Natural killer cell (primary cell): ENCODE measurements at regions of chr3 and their contacts with region 1.

Region 1: GRCh38 chr3:114418724-114419543 is 125.1 kb downstream of the TIGIT start:
- DNase-seq: peak in 1 of 2 donors; percentile 82
- ATAC-seq: peak; percentile 84 to 98 (median 97)
- H3K4me3 ChIP-seq: no peak overlapping the region
- H3K4me3 Mint-ChIP-seq: no peak overlapping the region
- H3K27ac ChIP-seq: no peak overlapping the region
- H3K27ac Mint-ChIP-seq: no peak overlapping the region
- H3K4me1 ChIP-seq: no peaks in the 10 kb centered on the region
- H3K4me1 Mint-ChIP-seq: no peaks in the 10 kb centered on the region
- H3K27me3 ChIP-seq: no peaks in the 10 kb centered on the region
- H3K27me3 Mint-ChIP-seq: no peaks in the 10 kb centered on the region
- CTCF ChIP-seq: peak; percentile 84

Region 2: GRCh38 chr3:113634782-113635474 is 784.0 kb before region 1 on chr3:
- intact Hi-C with region 1: no loop called
- DNase-seq: no peak
- ATAC-seq: no peak
- H3K4me3 ChIP-seq: no peak overlapping the region
- H3K4me3 Mint-ChIP-seq: no peak overlapping the region
- H3K27ac ChIP-seq: no peak overlapping the region
- H3K27ac Mint-ChIP-seq: no peak overlapping the region
- H3K4me1 ChIP-seq: no peaks in the 10 kb centered on the region
- H3K4me1 Mint-ChIP-seq: peaks cover 0 to 4% of the 10 kb centered on the region in 2 donors
- H3K27me3 ChIP-seq: no peaks in the 10 kb centered on the region
- H3K27me3 Mint-ChIP-seq: no peaks in the 10 kb centered on the region
- CTCF ChIP-seq: no peak

Region 3: DNA sequence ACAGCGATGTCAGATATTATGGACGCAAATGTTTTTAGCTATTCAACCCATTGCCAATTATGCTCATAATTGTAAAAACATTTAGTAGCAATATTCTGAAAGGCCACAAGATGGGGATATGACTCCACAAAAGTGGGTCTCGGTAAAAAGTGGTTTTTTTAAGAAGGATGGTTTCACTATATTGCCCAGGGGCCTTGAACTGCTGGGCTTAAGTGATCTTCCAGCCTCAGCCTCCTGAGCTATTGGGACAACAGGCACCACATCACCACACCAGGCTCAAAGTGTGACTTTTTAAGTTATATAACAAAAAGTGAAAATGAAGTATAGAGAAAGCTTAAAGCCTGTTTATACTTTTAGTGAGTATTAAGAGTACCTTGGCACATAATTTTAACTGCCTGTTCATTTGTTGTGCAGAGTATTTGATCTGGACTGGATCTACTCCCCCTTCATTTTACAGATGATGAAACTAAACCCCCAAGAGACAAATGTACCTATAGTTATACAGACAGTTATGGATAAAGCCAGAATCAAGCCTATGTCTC is 682.3 kb before region 1 on chr3:
- intact Hi-C with region 1: loop called (anchors 10 kb)
- DNase-seq: peak in 1 of 2 donors; percentile 85
- ATAC-seq: peak; percentile 87 to 92 (median 88)
- H3K4me3 ChIP-seq: no peak overlapping the region
- H3K4me3 Mint-ChIP-seq: no peak overlapping the region
- H3K27ac ChIP-seq: no peak overlapping the region
- H3K27ac Mint-ChIP-seq: peak overlapping the region; percentile 82 to 100
- H3K4me1 ChIP-seq: peaks cover 5% of the 10 kb centered on the region
- H3K4me1 Mint-ChIP-seq: peaks cover 32 to 37% of the 10 kb centered on the region in 2 donors
- H3K27me3 ChIP-seq: no peaks in the 10 kb centered on the region
- H3K27me3 Mint-ChIP-seq: no peaks in the 10 kb centered on the region
- CTCF ChIP-seq: peak; percentile 79

Region 4: GRCh38 chr3:114152519-114153151 is 266.3 kb before region 1 on chr3:
- intact Hi-C with region 1: loop called (anchors 1 kb)
- DNase-seq: peak; percentile 78 to 91
- ATAC-seq: peak; percentile 93 to 98 (median 98)
- H3K4me3 ChIP-seq: peak overlapping the region; percentile 28
- H3K4me3 Mint-ChIP-seq: peak overlapping the region; percentile 74
- H3K27ac ChIP-seq: peak overlapping the region; percentile 6
- H3K27ac Mint-ChIP-seq: peak overlapping the region; percentile 19 to 69
- H3K4me1 ChIP-seq: peaks cover 7% of the 10 kb centered on the region
- H3K4me1 Mint-ChIP-seq: peaks cover 8 to 10% of the 10 kb centered on the region in 2 donors
- H3K27me3 ChIP-seq: no peaks in the 10 kb centered on the region
- H3K27me3 Mint-ChIP-seq: peaks cover 0 to 3% of the 10 kb centered on the region in 2 donors
- CTCF ChIP-seq: peak; percentile 98

Region 5: DNA sequence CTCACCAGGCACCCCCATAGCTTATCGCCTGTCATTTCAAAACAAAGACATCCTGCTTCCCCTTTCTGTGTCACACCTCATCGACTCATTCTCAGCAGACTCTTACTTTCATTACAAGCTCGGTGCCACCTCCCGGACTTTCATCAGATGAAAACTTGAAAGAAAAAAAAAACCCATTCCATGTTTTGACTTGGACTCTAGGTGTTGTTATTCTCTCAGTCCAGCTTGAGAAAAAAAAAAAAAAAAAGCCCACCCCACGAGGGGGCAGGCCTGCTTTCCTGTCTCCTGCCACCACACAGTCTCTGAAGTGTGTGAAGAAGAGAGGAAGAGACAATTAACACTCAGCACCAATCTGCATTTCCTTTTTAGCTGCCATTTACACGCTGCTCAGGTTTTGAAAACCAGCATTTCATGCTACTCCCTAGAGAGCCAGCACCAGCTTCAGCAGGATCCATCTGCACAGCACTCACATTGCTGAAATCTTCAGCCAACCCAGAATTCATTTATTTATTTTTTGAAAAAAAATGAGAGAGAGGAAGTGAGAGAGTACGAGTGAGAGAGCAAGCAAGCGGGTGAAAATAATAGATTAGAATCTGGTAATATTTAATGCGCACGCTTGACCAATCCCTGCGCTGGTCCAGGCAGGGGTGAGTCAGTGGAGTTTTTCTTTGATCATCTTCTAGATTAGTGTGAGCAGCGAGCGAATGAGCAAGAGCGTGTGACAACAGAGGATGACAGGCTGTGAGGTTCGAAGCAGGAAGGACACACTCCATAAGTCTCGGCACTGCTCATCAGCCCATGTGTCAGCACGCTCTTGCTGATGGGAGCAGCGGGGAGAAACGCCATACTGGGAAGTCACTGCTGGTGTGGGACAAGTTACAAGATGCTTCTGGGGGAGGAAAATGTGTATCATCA is 205.1 kb before region 1 on chr3:
- intact Hi-C with region 1: loop called (anchors 2 kb)
- DNase-seq: peak; percentile 73 to 88
- ATAC-seq: peak; percentile 61 to 77 (median 63)
- H3K4me3 ChIP-seq: peak overlapping the region; percentile 46
- H3K4me3 Mint-ChIP-seq: no peak overlapping the region
- H3K27ac ChIP-seq: peak overlapping the region; percentile 97
- H3K27ac Mint-ChIP-seq: no peak overlapping the region
- H3K4me1 ChIP-seq: peaks cover 63% of the 10 kb centered on the region
- H3K4me1 Mint-ChIP-seq: no peaks in the 10 kb centered on the region
- H3K27me3 ChIP-seq: no peaks in the 10 kb centered on the region
- H3K27me3 Mint-ChIP-seq: no peaks in the 10 kb centered on the region
- CTCF ChIP-seq: peak; percentile 12

Region 6: GRCh38 chr3:114323546-114324254 is 95.2 kb before region 1 on chr3:
- intact Hi-C with region 1: no loop called
- DNase-seq: peak in 1 of 2 donors; percentile 46
- ATAC-seq: peak; percentile 87 to 92 (median 91)
- H3K4me3 ChIP-seq: no peak overlapping the region
- H3K4me3 Mint-ChIP-seq: peak overlapping the region; percentile 21
- H3K27ac ChIP-seq: peak overlapping the region; percentile 57
- H3K27ac Mint-ChIP-seq: peak overlapping the region; percentile 82 to 86
- H3K4me1 ChIP-seq: peaks cover 5% of the 10 kb centered on the region
- H3K4me1 Mint-ChIP-seq: peaks cover 49 to 52% of the 10 kb centered on the region in 2 donors
- H3K27me3 ChIP-seq: no peaks in the 10 kb centered on the region
- H3K27me3 Mint-ChIP-seq: no peaks in the 10 kb centered on the region
- CTCF ChIP-seq: no peak

Region 7: GRCh38 chr3:114362815-114363214 is 56.1 kb before region 1 on chr3:
- intact Hi-C with region 1: loop called (anchors 10 kb)
- DNase-seq: peak in 1 of 2 donors; percentile 33
- ATAC-seq: peak in 2 of 3 donors; percentile 38 to 65
- H3K4me3 ChIP-seq: no peak overlapping the region
- H3K4me3 Mint-ChIP-seq: no peak overlapping the region
- H3K27ac ChIP-seq: no peak overlapping the region
- H3K27ac Mint-ChIP-seq: peak overlapping the region; percentile 43 to 57
- H3K4me1 ChIP-seq: no peaks in the 10 kb centered on the region
- H3K4me1 Mint-ChIP-seq: no peaks in the 10 kb centered on the region
- H3K27me3 ChIP-seq: no peaks in the 10 kb centered on the region
- H3K27me3 Mint-ChIP-seq: no peaks in the 10 kb centered on the region
- CTCF ChIP-seq: peak; percentile 41

Region 8: GRCh38 chr3:114383875-114384557 is 34.9 kb before region 1 on chr3:
- intact Hi-C with region 1: loop called (anchors 1 kb)
- DNase-seq: peak; percentile 50 to 80
- ATAC-seq: peak; percentile 92 to 98 (median 98)
- H3K4me3 ChIP-seq: peak overlapping the region; percentile 38
- H3K4me3 Mint-ChIP-seq: peak overlapping the region; percentile 83
- H3K27ac ChIP-seq: peak overlapping the region; percentile 63
- H3K27ac Mint-ChIP-seq: no peak overlapping the region
- H3K4me1 ChIP-seq: peaks cover 13% of the 10 kb centered on the region
- H3K4me1 Mint-ChIP-seq: peaks cover 10 to 14% of the 10 kb centered on the region in 2 donors
- H3K27me3 ChIP-seq: no peaks in the 10 kb centered on the region
- H3K27me3 Mint-ChIP-seq: no peaks in the 10 kb centered on the region
- CTCF ChIP-seq: peak; percentile 88